AG04449 (cell line): ENCODE measurements at regions of chr2 and their contacts with region 1.

Region 1: GRCh38 chr2:235746257-235747084 is 252.6 kb downstream of the AGAP1 start:
- DNase-seq: peak; percentile 63
- H3K4me3 ChIP-seq: no peak overlapping the region
- CTCF ChIP-seq: peak; percentile 84

Region 2: DNA sequence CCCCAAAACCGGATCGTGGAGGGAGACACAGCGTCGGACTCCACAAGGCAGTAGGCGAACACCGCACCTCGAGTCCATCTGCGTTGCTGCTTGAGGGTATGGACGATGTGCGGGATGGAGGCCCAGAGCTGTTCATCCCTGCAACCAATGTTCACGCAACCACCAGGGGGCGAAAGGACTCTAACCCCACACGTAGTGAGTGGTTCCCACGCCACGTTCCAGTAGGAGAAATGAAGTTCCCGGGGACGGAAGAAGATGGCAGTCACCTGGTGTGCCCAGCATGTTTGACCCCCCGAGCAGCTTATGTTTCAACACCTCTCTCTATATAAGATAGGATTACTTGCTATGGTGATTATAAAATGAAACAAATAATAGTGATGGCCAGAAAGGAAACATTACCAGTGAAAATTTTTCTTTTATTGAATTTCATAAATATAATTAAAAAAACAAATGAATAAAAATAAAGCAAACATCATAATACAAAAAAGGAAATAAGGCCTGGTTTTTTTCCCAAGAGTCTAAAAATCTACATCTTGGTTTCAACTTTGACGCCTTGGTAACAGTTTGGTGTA is 610.4 kb before region 1 on chr2:
- CTCF ChIA-PET with region 1: interaction called, 74 read pairs
- POLR2A ChIA-PET with region 1: no interaction called
- DNase-seq: peak; percentile 9
- H3K4me3 ChIP-seq: no peak overlapping the region
- CTCF ChIP-seq: peak; percentile 93

Region 3: GRCh38 chr2:235588750-235589149 is 157.7 kb before region 1 on chr2:
- CTCF ChIA-PET with region 1: interaction called, 484 read pairs
- POLR2A ChIA-PET with region 1: no interaction called
- DNase-seq: no peak
- H3K4me3 ChIP-seq: no peak overlapping the region
- CTCF ChIP-seq: no peak

Region 4: GRCh38 chr2:235669269-235669831 is 77.1 kb before region 1 on chr2:
- CTCF ChIA-PET with region 1: interaction called, 10 read pairs
- POLR2A ChIA-PET with region 1: no interaction called
- DNase-seq: no peak
- H3K4me3 ChIP-seq: peak overlapping the region; percentile 55
- CTCF ChIP-seq: no peak

Region 5: GRCh38 chr2:235727174-235727573 is 19.3 kb before region 1 on chr2:
- CTCF ChIA-PET with region 1: interaction called, 21 read pairs
- POLR2A ChIA-PET with region 1: no interaction called
- DNase-seq: no peak
- H3K4me3 ChIP-seq: no peak overlapping the region
- CTCF ChIP-seq: no peak

Region 6: DNA sequence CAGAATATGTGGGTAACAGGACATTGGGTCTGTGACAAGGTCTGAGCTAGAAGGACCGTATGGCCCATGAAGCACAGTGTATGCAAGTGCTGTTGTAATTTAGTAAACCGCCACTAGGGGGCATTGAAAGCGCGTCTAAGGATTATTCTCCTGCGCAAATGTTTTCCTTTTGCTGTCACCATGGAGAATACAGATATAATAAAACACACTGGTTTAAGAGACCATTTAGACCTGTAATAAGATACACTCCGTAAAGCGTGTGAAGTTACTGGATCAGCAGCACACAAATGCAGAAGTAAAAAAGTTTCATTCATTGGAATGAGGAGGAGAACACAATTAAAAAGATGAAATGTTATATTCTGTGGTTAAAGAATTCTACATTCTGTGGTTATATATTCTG is 19.8 kb after region 1 on chr2:
- CTCF ChIA-PET with region 1: interaction called, 39 read pairs
- POLR2A ChIA-PET with region 1: no interaction called
- DNase-seq: no peak
- H3K4me3 ChIP-seq: no peak overlapping the region
- CTCF ChIP-seq: peak; percentile 63